BJ (cell line): ENCODE measurements at regions of chr1 and their contacts with region 1.

Region 1: GRCh38 chr1:107246775-107247345 is 106.0 kb downstream of the NTNG1 start:
- DNase-seq: no peak
- H3K4me3 ChIP-seq: no peak overlapping the region
- H3K27me3 ChIP-seq: no peaks in the 10 kb centered on the region
- CTCF ChIP-seq: no peak

Region 2: GRCh38 chr1:107184888-107185287 is 62.0 kb before region 1 on chr1:
- CTCF ChIA-PET with region 1: no interaction called
- POLR2A ChIA-PET with region 1: interaction called, 12 read pairs
- DNase-seq: no peak
- H3K4me3 ChIP-seq: no peak overlapping the region
- H3K27me3 ChIP-seq: no peaks in the 10 kb centered on the region
- CTCF ChIP-seq: no peak

Region 3: GRCh38 chr1:107196973-107197562 is 49.8 kb before region 1 on chr1:
- CTCF ChIA-PET with region 1: no interaction called
- POLR2A ChIA-PET with region 1: no interaction called
- DNase-seq: no peak
- H3K4me3 ChIP-seq: no peak overlapping the region
- H3K27me3 ChIP-seq: no peaks in the 10 kb centered on the region
- CTCF ChIP-seq: peak; percentile 38; the same call in 1 of the 2 replicates

Region 4: GRCh38 chr1:107225706-107226105 is 21.2 kb before region 1 on chr1:
- CTCF ChIA-PET with region 1: no interaction called
- POLR2A ChIA-PET with region 1: no interaction called
- DNase-seq: no peak
- H3K4me3 ChIP-seq: no peak overlapping the region
- H3K27me3 ChIP-seq: no peaks in the 10 kb centered on the region
- CTCF ChIP-seq: no peak

Region 5: GRCh38 chr1:107262467-107263286 is 15.8 kb after region 1 on chr1:
- CTCF ChIA-PET with region 1: no interaction called
- POLR2A ChIA-PET with region 1: no interaction called
- DNase-seq: no peak
- H3K4me3 ChIP-seq: no peak overlapping the region
- H3K27me3 ChIP-seq: no peaks in the 10 kb centered on the region
- CTCF ChIP-seq: no peak